B cell (primary cell): ENCODE measurements at regions of chr2 and their contacts with region 1.

Region 1: GRCh38 chr2:200888704-200889625 is at the starts of genes NIF3L1 and PPIL3:
- DNase-seq: peak; percentile 98
- ATAC-seq: peak; percentile 81
- H3K4me3 ChIP-seq: peak within 1 kb of the TSS; percentile 76 to 99 (median 87)
- H3K4me3 Mint-ChIP-seq: peak within 1 kb of the TSS; percentile 95
- H3K27ac ChIP-seq: peak within 1 kb of the TSS; percentile 90 to 93
- H3K27ac Mint-ChIP-seq: peak within 1 kb of the TSS; percentile 98
- H3K4me1 ChIP-seq: peaks cover 15 to 28% of the 10 kb centered on the region in 2 donors
- H3K4me1 Mint-ChIP-seq: peaks cover 43% of the 10 kb centered on the region
- H3K27me3 ChIP-seq: no peaks in the 10 kb centered on the region
- H3K27me3 Mint-ChIP-seq: no peaks in the 10 kb centered on the region
- CTCF ChIP-seq: no peak
- total RNA-seq, gene NIF3L1: 26.7 and 32.9 TPM in 2 replicates
- total RNA-seq, gene PPIL3: 55.5 and 57.9 TPM in 2 replicates

Region 2: GRCh38 chr2:200509612-200510433 is 379.1 kb before region 1 on chr2 and contains the start of gene KCTD18:
- CTCF ChIA-PET with region 1: no interaction called
- POLR2A ChIA-PET with region 1: interaction called, 3 read pairs
- intact Hi-C with region 1: loop called (anchors 5 kb)
- DNase-seq: peak; percentile 91
- ATAC-seq: peak; percentile 100
- H3K4me3 ChIP-seq: peak within 1 kb of the TSS; percentile 64 to 81 (median 66)
- H3K4me3 Mint-ChIP-seq: peak within 1 kb of the TSS; percentile 95
- H3K27ac ChIP-seq: peak within 1 kb of the TSS; percentile 49 to 79
- H3K27ac Mint-ChIP-seq: peak within 1 kb of the TSS; percentile 92
- H3K4me1 ChIP-seq: peaks cover 15 to 21% of the 10 kb centered on the region in 2 donors
- H3K4me1 Mint-ChIP-seq: peaks cover 28% of the 10 kb centered on the region
- H3K27me3 ChIP-seq: peaks cover 0 to 13% (median 13%) of the 10 kb centered on the region in 4 experiments
- H3K27me3 Mint-ChIP-seq: peaks cover 4% of the 10 kb centered on the region
- CTCF ChIP-seq: peak; percentile 83
- total RNA-seq, gene KCTD18: 20.2 and 21.3 TPM in 2 replicates

Region 3: GRCh38 chr2:200703127-200703925 is 185.6 kb before region 1 on chr2:
- CTCF ChIA-PET with region 1: no interaction called
- POLR2A ChIA-PET with region 1: no interaction called
- intact Hi-C with region 1: no loop called
- DNase-seq: peak; percentile 46
- ATAC-seq: no peak
- H3K4me3 ChIP-seq: no peak overlapping the region
- H3K4me3 Mint-ChIP-seq: no peak overlapping the region
- H3K27ac ChIP-seq: no peak overlapping the region
- H3K27ac Mint-ChIP-seq: no peak overlapping the region
- H3K4me1 ChIP-seq: no peaks in the 10 kb centered on the region
- H3K4me1 Mint-ChIP-seq: peaks cover 6% of the 10 kb centered on the region
- H3K27me3 ChIP-seq: no peaks in the 10 kb centered on the region
- H3K27me3 Mint-ChIP-seq: peaks cover 30% of the 10 kb centered on the region
- CTCF ChIP-seq: peak; percentile 40

Region 4: DNA sequence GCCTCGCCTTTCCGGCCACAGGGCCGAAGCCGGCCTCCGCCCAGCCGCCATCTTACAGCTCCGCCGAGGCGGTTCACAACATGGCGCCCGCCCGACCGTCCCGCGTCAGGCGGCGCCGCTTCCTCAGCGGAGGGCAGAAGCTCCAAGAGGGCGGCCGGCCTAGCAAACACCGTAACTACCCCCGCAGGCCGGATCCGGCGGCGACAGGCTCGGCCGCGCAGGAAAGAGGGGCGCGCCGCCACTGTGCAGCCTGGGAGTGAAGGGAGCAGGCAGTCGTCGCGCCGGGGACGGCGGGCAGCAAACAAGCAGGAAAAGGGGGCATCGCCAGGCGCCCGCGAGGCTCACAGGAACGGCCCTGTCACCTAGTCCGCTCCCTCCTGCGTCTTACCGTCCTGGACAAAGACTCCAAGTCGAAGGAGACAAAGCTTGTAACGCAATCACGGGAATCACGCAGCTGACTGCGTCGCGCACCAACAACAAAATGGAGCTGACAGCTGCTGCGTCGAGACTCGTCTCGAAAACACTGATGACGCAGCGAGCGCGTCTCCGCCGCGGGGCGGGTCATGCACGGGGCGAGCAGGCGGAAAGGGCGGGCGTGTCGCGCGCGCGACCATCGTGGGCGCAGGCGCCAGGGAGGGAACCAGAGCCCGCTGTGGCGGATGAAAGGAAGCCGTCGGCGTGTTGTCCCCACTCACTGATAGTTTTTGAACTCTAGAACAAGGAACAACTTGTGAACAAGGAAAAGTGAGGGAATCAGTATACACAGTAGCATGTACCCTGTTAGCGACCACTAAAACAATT is 24.6 kb before region 1 on chr2 and contains the start of gene CLK1:
- CTCF ChIA-PET with region 1: interaction called, 13 read pairs
- POLR2A ChIA-PET with region 1: interaction called, 54 read pairs
- intact Hi-C with region 1: loop called (anchors 1 kb)
- DNase-seq: peak; percentile 97
- ATAC-seq: peak; percentile 85
- H3K4me3 ChIP-seq: peak within 1 kb of the TSS; percentile 85 to 100 (median 97)
- H3K4me3 Mint-ChIP-seq: peak within 1 kb of the TSS; percentile 93
- H3K27ac ChIP-seq: peak within 1 kb of the TSS; percentile 98 to 99
- H3K27ac Mint-ChIP-seq: peak within 1 kb of the TSS; percentile 100
- H3K4me1 ChIP-seq: peaks cover 27 to 31% of the 10 kb centered on the region in 2 donors
- H3K4me1 Mint-ChIP-seq: peaks cover 41% of the 10 kb centered on the region
- H3K27me3 ChIP-seq: no peaks in the 10 kb centered on the region
- H3K27me3 Mint-ChIP-seq: no peaks in the 10 kb centered on the region
- CTCF ChIP-seq: no peak
- total RNA-seq, gene CLK1: 396 and 409 TPM in 2 replicates

Region 5: GRCh38 chr2:200963124-200963917 is 74.4 kb after region 1 on chr2 and contains the start of gene ORC2:
- CTCF ChIA-PET with region 1: interaction called, 6 read pairs
- POLR2A ChIA-PET with region 1: interaction called, 3 read pairs
- intact Hi-C with region 1: loop called (anchors 5 kb)
- DNase-seq: peak; percentile 97
- ATAC-seq: peak; percentile 92
- H3K4me3 ChIP-seq: peak within 1 kb of the TSS; percentile 77 to 97 (median 90)
- H3K4me3 Mint-ChIP-seq: peak within 1 kb of the TSS; percentile 92
- H3K27ac ChIP-seq: peak within 1 kb of the TSS; percentile 90 to 92
- H3K27ac Mint-ChIP-seq: peak within 1 kb of the TSS; percentile 98
- H3K4me1 ChIP-seq: peaks cover 28 to 30% of the 10 kb centered on the region in 2 donors
- H3K4me1 Mint-ChIP-seq: peaks cover 53% of the 10 kb centered on the region
- H3K27me3 ChIP-seq: no peaks in the 10 kb centered on the region
- H3K27me3 Mint-ChIP-seq: no peaks in the 10 kb centered on the region
- CTCF ChIP-seq: peak; percentile 77
- total RNA-seq, gene ORC2: 50.6 and 63.6 TPM in 2 replicates